HCT116 (cell line): ENCODE measurements at regions of chr5 and their contacts with region 1.

Region 1: GRCh38 chr5:83076742-83077661 is at the starts of genes TMEM167A and XRCC4:
- DNase-seq: peak; percentile 98
- ATAC-seq: peak; percentile 99
- H3K4me3 ChIP-seq: peak within 1 kb of the TSS; percentile 86 to 93
- H3K27ac ChIP-seq: peak within 1 kb of the TSS; percentile 64
- H3K4me1 ChIP-seq: peaks cover 9 to 18% of the 10 kb centered on the region in 2 experiments; a peak in 3 of 4 replicates
- H3K27me3 ChIP-seq: no peaks in the 10 kb centered on the region
- CTCF ChIP-seq: no peak
- POLR2A ChIP-seq: peak; percentile 79
- RAD21 ChIP-seq: no peak
- total RNA-seq, gene TMEM167A: 108 TPM
- total RNA-seq, gene XRCC4: 24.6 TPM

Region 2: DNA sequence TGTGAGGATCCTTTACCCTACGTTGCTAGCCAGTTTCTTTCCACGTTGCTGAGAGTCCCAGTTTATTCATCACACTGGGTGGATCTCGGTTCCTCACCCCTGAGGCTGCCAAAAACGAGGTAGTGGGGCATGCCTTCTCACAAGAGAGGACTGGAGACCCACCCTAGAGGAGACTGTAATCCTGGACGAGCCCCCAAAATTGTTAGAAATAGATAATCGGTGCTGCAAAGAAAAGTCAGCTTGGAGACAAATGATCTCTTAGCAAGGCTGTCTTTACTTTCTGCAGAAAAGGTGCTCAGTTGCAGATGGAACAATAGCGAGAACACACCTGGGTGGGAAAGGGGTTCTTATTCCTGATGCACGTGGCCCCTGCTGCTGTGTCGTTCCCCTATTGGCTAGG is 101.6 kb before region 1 on chr5:
- CTCF ChIA-PET with region 1: no interaction called
- POLR2A ChIA-PET with region 1: interaction called, 5 read pairs
- RAD21 ChIA-PET with region 1: no interaction called
- intact Hi-C with region 1: loop called (anchors 5 kb)
- DNase-seq: no peak
- ATAC-seq: peak; percentile 20; the same call in 1 of the 2 replicates
- H3K4me3 ChIP-seq: peak overlapping the region; percentile 63 to 71
- H3K27ac ChIP-seq: peak overlapping the region; percentile 96
- H3K4me1 ChIP-seq: peaks cover 24 to 84% of the 10 kb centered on the region in 2 experiments
- H3K27me3 ChIP-seq: no peaks in the 10 kb centered on the region
- CTCF ChIP-seq: no peak
- POLR2A ChIP-seq: no peak
- RAD21 ChIP-seq: no peak

Region 3: DNA sequence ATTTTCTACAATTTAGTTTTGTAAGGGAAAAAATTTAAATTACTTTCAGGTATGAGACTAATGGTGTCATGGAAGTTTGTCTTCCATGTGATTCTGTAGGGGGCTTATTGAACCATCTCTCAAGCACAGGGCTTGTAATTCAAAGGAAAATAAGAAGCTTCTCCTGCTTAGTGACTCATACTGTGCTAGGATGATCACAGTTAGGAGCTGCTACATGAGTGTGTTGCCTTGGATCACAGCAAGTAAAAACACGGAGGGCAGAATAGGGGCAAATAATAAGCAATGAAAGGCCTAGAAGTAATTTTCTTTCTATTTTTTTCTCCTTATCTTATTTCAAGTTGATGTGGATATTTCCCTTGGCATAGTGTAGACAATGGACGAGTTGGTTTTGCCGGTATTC is 28.7 kb before region 1 on chr5:
- CTCF ChIA-PET with region 1: no interaction called
- POLR2A ChIA-PET with region 1: interaction called, 3 read pairs
- RAD21 ChIA-PET with region 1: interaction called in 1 of 2 experiments, 11 read pairs
- intact Hi-C with region 1: no loop called
- DNase-seq: no peak
- ATAC-seq: no peak
- H3K4me3 ChIP-seq: no peak overlapping the region
- H3K27ac ChIP-seq: no peak overlapping the region
- H3K4me1 ChIP-seq: no peaks in the 10 kb centered on the region
- H3K27me3 ChIP-seq: no peaks in the 10 kb centered on the region
- CTCF ChIP-seq: no peak
- POLR2A ChIP-seq: no peak
- RAD21 ChIP-seq: no peak

Region 4: GRCh38 chr5:83124593-83124992 is 47.6 kb after region 1 on chr5:
- CTCF ChIA-PET with region 1: no interaction called
- POLR2A ChIA-PET with region 1: no interaction called
- RAD21 ChIA-PET with region 1: no interaction called
- intact Hi-C with region 1: no loop called
- DNase-seq: no peak
- ATAC-seq: no peak
- H3K4me3 ChIP-seq: no peak overlapping the region
- H3K27ac ChIP-seq: no peak overlapping the region
- H3K4me1 ChIP-seq: peaks cover 4 to 17% of the 10 kb centered on the region in 2 experiments; a peak in 3 of 4 replicates
- H3K27me3 ChIP-seq: no peaks in the 10 kb centered on the region
- CTCF ChIP-seq: no peak
- POLR2A ChIP-seq: no peak
- RAD21 ChIP-seq: no peak

Region 5: DNA sequence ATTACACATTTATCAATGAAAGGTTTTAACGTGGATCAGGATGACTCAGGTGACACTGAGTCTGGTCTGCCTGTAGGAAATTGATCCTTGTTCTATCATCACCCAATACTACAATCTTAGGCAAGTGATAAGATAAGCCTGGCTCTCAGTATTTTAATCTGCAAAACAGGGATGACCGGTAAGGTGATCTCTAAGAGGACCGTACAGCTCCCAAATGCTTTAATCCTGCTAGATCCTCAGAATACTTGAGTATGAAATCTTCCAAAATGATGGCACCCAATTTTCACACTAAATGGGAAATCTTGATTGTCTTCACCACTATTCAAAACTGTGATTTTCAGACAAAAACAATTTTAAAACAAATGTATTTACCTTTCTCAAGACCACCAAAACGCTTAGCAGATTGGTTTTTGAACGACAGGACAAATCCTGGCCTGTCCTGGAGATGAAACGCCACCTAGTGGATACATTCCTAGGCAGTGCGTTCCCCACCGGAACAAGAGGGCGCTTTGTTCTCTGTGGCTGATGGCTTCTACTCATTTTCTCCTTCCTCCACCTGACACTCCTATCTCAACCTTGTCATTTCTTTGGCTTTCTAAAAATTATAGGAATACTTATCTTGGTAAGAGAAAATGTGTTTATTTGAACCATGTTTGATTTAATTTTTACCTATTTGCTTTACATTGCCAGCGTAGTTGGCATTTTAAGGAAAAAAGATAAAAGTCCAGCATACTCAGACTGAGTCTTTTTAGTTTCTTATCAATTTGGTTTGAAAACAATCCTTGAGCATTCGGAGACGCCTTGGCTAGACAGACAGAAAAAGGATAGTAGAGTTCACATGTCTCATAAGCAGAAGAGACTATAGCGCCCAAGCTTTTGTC is 353.4 kb after region 1 on chr5:
- CTCF ChIA-PET with region 1: no interaction called
- POLR2A ChIA-PET with region 1: no interaction called
- RAD21 ChIA-PET with region 1: no interaction called
- intact Hi-C with region 1: loop called (anchors 5 kb)
- DNase-seq: peak; percentile 75
- ATAC-seq: peak; percentile 98
- H3K4me3 ChIP-seq: no peak overlapping the region
- H3K27ac ChIP-seq: no peak overlapping the region
- H3K4me1 ChIP-seq: peaks cover 0 to 10% of the 10 kb centered on the region in 2 experiments; a peak in 2 of 4 replicates
- H3K27me3 ChIP-seq: no peaks in the 10 kb centered on the region
- CTCF ChIP-seq: peak; percentile 92 to 98 (median 96)
- POLR2A ChIP-seq: no peak
- RAD21 ChIP-seq: peak; percentile 91

Region 6: DNA sequence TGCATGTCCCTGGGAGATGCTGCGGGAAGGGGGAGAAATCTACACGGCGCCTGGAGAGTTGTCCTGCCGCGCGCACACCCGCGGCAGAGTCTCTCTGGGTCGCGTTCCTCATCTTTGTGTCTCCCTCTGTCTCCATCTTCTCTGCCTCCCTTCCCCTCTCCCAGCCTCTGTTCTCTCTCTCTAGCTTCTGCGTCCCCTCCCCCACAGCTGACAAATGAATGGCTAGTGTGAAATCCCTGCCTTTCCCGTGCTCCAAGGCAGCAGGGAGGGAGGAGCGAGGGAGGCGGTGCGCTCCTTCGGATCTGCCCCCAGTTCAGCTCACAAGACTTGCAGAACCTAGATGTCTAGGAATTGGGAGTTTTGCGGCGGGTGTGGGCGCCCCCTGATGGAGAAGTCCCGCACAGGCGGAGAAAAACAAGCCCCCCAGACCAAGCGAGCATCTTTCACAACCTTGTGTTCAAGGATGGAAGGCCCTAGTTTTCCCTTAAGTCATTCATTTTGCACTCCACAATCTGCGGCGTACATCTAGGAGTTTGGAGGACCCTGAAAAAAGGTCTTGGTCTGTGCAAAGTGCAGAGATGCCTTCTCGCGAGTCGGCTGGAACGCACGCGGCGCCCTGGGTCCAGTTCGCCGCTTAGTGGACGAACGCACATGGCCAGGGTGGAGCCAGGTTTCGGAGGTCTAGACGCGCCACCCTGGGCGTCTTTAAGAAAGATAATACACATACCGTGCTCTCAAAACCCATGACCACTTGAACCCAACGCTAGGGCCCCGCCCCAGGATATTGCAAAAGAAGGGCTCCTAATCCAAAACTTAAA is 396.6 kb after region 1 on chr5:
- CTCF ChIA-PET with region 1: no interaction called
- POLR2A ChIA-PET with region 1: no interaction called
- RAD21 ChIA-PET with region 1: no interaction called
- intact Hi-C with region 1: loop called (anchors 5 kb)
- DNase-seq: peak; percentile 86
- ATAC-seq: peak; percentile 65
- H3K4me3 ChIP-seq: peak overlapping the region; percentile 55 to 62
- H3K27ac ChIP-seq: peak overlapping the region; percentile 63
- H3K4me1 ChIP-seq: peaks cover 13 to 40% of the 10 kb centered on the region in 2 experiments
- H3K27me3 ChIP-seq: no peaks in the 10 kb centered on the region
- CTCF ChIP-seq: peak; percentile 44 to 86 (median 70); a peak in 5 of 6 replicates
- POLR2A ChIP-seq: no peak
- RAD21 ChIP-seq: peak; percentile 81